ENCODE measurements at regions of chr6 and their contacts with region 1.

Region 1: GRCh38 chr6:5570641-5571040 is 309.3 kb downstream of the FARS2 start:
- DNase-seq: no peak
- ATAC-seq: no peak
- H3K4me3 ChIP-seq: no peak overlapping the region
- H3K4me3 Mint-ChIP-seq: no peak overlapping the region
- H3K27ac ChIP-seq: no peak overlapping the region
- H3K27ac Mint-ChIP-seq: no peak overlapping the region
- H3K4me1 ChIP-seq: no peaks in the 10 kb centered on the region
- H3K4me1 Mint-ChIP-seq: peaks cover 11 to 32% (median 14%) of the 10 kb centered on the region in 3 donors
- H3K27me3 ChIP-seq: no peaks in the 10 kb centered on the region
- H3K27me3 Mint-ChIP-seq: no peaks in the 10 kb centered on the region

Region 2: DNA sequence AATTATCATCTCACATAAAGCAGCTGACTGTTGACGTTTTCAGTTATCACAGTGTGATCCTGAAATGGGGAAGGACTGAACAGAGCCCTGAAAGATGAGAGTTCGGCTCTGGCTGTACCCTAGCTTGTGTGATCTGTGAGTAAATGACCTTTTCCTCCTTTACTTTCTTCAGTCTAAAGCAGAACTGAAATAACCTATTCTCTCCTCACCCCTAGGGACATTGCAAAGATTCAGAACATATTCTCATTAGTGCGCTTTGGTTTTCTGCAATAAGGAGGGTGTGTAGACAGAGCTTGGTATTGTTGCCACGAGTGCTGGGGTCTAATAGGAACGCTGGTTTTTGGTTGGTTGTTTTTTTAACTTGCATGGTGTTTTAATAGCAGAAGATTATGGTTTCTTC is 292.6 kb before region 1 on chr6:
- CTCF ChIA-PET with region 1: no interaction called
- POLR2A ChIA-PET with region 1: no interaction called
- DNase-seq: no peak
- ATAC-seq: no peak
- H3K4me3 ChIP-seq: no peak overlapping the region
- H3K4me3 Mint-ChIP-seq: no peak overlapping the region
- H3K27ac ChIP-seq: no peak overlapping the region
- H3K27ac Mint-ChIP-seq: no peak overlapping the region
- H3K4me1 ChIP-seq: peaks cover 3 to 4% of the 10 kb centered on the region in 2 experiments
- H3K4me1 Mint-ChIP-seq: peaks cover 44 to 63% (median 44%) of the 10 kb centered on the region in 3 donors
- H3K27me3 ChIP-seq: no peaks in the 10 kb centered on the region
- H3K27me3 Mint-ChIP-seq: no peaks in the 10 kb centered on the region

Region 3: GRCh38 chr6:5510331-5511133 is 60.1 kb before region 1 on chr6:
- CTCF ChIA-PET with region 1: no interaction called
- POLR2A ChIA-PET with region 1: interaction called in 1 of 2 experiments, 12 read pairs
- DNase-seq: no peak
- ATAC-seq: no peak
- H3K4me3 ChIP-seq: no peak overlapping the region
- H3K4me3 Mint-ChIP-seq: no peak overlapping the region
- H3K27ac ChIP-seq: no peak overlapping the region
- H3K27ac Mint-ChIP-seq: no peak overlapping the region
- H3K4me1 ChIP-seq: peaks cover 19 to 21% of the 10 kb centered on the region in 2 experiments
- H3K4me1 Mint-ChIP-seq: peaks cover 31 to 56% (median 49%) of the 10 kb centered on the region in 3 donors
- H3K27me3 ChIP-seq: no peaks in the 10 kb centered on the region
- H3K27me3 Mint-ChIP-seq: no peaks in the 10 kb centered on the region